ENCODE measurements at regions of chr11 and their contacts with region 1.

Region 1: DNA sequence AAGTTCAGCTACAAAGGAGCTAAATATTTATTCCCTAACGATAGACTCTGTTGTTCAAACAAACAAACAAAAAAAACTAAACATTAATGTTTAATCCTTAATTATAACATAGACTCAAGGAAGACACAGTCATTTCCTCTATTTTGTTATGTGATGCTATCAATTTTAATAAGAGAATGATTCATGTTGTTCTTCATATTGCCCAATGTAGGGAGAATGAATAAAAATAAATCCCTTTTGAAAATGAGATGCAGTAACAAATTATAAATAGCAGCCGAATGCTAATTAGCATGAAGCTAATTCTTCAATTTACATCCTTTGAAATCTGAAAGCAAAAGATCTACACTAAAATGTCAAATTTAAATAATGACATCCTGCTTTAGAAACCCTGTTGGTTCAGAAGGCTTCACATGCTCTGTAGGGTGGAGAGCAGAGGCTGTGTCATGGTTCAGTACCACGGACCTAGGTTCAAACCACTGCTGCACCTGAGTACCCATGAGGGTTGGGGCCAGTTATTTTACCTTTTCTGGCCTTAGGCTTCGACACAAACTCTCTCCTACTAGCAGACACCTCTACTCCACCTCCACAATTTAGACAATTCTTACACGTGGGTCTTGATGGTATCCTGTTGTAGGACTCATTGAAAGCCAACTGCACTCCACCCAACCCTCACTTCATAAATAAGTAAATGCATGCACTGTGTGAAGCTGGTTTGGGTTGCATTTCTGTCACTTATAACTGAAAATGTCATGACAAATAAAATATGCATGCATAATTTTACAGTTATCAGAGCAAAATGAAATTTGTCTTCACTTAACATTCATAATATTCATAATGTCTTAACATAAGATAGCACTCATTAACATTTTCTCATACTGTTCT is 89.0 kb downstream of the RRAS2 start:
- DNase-seq: no peak
- ATAC-seq: no peak
- H3K4me3 ChIP-seq: no peak overlapping the region
- H3K27ac ChIP-seq: no peak overlapping the region
- H3K4me1 ChIP-seq: no peaks in the 10 kb centered on the region
- H3K27me3 ChIP-seq: no peaks in the 10 kb centered on the region
- CTCF ChIP-seq: no peak

Region 2: GRCh38 chr11:14054116-14055107 is 215.5 kb before region 1 on chr11:
- CTCF ChIA-PET with region 1: no interaction called
- POLR2A ChIA-PET with region 1: no interaction called
- in situ Hi-C with region 1: no loop called
- intact Hi-C with region 1: no loop called
- DNase-seq: no peak
- ATAC-seq: no peak
- H3K4me3 ChIP-seq: no peak overlapping the region
- H3K27ac ChIP-seq: no peak overlapping the region
- H3K4me1 ChIP-seq: no peaks in the 10 kb centered on the region
- H3K27me3 ChIP-seq: no peaks in the 10 kb centered on the region
- CTCF ChIP-seq: no peak

Region 3: DNA sequence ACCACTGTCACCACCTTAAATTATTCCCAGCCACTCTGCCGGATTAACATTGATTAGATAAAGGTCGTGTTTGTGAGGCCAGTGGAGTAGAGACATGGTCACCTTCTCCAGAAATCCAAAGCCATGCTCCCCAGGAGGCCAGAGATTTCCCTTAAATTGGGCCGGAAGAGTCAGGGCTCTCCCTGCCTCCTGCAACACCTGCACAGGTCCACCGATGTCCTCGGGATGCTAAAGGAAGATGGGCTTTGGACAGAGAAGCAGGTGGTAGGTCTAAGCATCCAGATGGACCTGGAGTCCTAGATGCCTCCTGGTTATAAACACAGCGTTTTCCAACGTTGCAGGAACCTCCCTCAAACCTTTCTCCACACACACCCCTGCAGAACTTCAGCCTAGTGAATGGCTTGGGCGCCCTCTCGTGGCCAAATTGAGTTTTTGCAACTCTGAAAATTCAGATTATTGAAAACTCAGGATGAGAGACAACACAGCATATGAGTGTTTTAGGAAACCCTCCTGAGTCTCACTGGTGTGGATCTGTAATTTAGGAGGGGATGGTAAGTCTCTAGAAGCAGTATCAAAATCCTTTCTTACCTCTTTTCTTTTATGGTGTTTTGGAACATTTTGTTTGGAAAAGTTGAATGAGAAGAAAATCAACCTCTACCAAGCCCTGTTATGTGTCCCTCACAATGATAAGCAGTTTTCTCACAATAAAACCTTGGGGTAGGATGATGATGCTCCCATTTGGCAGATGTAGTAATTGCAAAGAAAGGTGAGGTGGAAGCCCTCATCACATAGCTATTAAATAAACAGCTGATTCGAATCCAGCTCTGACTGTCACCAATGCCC is 20.6 kb before region 1 on chr11:
- CTCF ChIA-PET with region 1: no interaction called
- POLR2A ChIA-PET with region 1: no interaction called
- in situ Hi-C with region 1: no loop called
- intact Hi-C with region 1: no loop called
- DNase-seq: no peak
- ATAC-seq: peak; percentile 70
- H3K4me3 ChIP-seq: no peak overlapping the region
- H3K27ac ChIP-seq: no peak overlapping the region
- H3K4me1 ChIP-seq: no peaks in the 10 kb centered on the region
- H3K27me3 ChIP-seq: peaks cover 14% of the 10 kb centered on the region
- CTCF ChIP-seq: peak; percentile 90

Region 4: GRCh38 chr11:14364322-14364721 is 94.4 kb after region 1 on chr11:
- CTCF ChIA-PET with region 1: no interaction called
- POLR2A ChIA-PET with region 1: no interaction called
- in situ Hi-C with region 1: no loop called
- intact Hi-C with region 1: no loop called
- DNase-seq: no peak
- ATAC-seq: no peak
- H3K4me3 ChIP-seq: no peak overlapping the region
- H3K27ac ChIP-seq: no peak overlapping the region
- H3K4me1 ChIP-seq: no peaks in the 10 kb centered on the region
- H3K27me3 ChIP-seq: no peaks in the 10 kb centered on the region
- CTCF ChIP-seq: no peak

Region 5: DNA sequence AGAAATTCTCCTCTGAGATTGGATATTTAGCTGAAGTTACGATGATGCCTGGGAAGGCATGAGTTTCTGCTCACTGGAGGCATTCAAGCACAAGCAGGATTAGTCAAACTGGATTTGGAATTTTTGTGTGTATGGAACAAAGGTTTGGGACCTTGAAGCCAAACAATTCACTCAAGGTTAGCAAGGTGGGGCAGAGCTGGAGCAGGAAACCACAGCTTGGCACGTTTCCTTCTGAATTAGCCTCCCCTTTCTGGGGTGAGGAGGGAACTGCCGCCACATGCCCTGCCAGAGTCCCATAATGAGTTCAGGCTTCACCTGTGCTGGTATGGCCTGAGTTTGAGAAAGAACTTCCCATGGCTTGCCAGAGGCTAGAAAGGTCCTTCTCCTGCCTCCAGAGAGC is 140.0 kb after region 1 on chr11:
- CTCF ChIA-PET with region 1: no interaction called
- POLR2A ChIA-PET with region 1: interaction called, 10 read pairs
- in situ Hi-C with region 1: no loop called
- intact Hi-C with region 1: no loop called
- DNase-seq: no peak
- ATAC-seq: no peak
- H3K4me3 ChIP-seq: no peak overlapping the region
- H3K27ac ChIP-seq: no peak overlapping the region
- H3K4me1 ChIP-seq: no peaks in the 10 kb centered on the region
- H3K27me3 ChIP-seq: no peaks in the 10 kb centered on the region
- CTCF ChIP-seq: no peak

Measured in Panc1 (cell line).